Dendritic cell treated with granulocyte-macrophage colony-stimulating factor and Interleukin-4, amounts not matched to agents 40 ng/mL and 50 ng/mL, for 4 days (primary cell): ENCODE measurements at regions of chr11 and their contacts with region 1.

Region 1: DNA sequence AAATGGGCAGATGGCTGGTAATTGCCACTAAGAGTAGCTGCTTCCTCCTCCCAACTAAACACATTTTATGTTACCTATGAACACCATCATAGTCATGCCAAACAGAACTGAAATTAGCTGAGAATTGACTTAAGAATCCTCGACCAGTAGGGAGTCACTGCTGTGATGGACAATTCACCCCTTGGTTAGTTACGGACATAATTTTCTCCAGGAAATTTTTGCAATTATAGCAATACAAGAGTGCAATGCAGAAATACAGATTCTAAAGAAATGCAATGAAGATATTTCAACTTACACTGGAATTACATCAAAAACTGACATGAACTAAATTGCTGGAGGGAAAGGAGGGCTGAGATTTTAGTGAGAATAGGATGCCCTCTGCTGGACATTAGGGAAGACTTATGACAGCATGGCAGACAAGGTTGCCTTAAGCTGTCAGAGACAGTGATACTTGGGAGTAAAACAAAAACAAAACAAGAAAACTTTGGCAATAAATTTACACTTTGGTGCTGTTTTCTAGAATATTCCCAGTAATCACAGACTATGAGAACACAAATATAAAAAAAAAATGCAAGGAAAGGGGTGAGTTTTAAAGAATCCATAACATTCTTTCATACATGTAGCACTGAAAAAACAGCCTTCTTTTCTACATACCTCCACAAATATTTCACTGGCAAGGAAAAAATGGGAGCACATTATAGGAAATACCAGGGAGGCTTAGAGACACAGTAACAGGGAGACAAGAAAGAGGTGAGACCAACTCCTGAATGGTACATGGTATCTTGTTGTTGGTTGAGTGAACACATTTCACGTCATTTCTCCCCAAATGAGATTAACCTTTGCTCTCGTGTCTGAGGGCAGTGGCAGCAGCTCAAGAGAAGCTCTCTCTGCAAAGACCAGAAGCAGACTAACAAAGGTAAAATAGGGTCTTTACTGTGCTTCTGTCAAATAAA is 11.2 kb upstream of the PPP2R1B start:
- H3K4me3 Mint-ChIP-seq: no peak overlapping the region
- H3K27ac Mint-ChIP-seq: no peak overlapping the region
- H3K4me1 Mint-ChIP-seq: no peaks in the 10 kb centered on the region
- H3K27me3 Mint-ChIP-seq: no peaks in the 10 kb centered on the region

Region 2: DNA sequence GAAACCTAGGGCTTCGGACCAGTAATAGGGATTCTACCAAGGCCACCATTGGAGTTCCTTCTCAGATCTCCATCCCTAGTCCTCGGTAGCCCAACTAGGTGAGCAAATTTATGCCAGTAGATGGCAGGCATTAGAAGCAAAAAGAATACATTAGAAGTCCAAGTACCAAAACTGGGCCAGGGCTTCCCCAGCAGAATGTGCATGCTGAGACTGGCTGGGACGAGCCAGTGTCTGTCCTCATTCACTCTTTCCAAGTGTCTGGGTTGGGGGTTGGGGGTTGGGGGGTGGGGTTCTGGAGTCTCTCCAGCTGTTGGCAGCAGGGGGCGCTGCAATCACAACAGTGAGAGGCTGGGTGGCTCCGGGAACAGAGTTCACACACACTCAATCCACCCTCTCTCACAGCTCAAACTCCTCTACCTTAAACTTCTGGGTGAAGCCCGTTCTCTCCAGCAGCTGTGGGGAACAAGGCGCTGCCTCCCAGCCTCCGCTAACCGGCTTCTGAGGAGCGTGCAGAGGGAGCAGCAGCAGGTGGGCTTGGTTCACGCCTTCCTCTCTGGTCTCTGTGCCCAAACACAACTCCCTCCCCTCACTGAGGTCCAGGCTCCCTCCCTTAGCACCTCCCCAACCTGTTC is 322.7 kb before region 1 on chr11:
- intact Hi-C with region 1: loop called (anchors 10 kb)
- H3K4me3 Mint-ChIP-seq: no peak overlapping the region
- H3K27ac Mint-ChIP-seq: no peak overlapping the region
- H3K4me1 Mint-ChIP-seq: no peaks in the 10 kb centered on the region
- H3K27me3 Mint-ChIP-seq: peaks cover 20% of the 10 kb centered on the region

Region 3: GRCh38 chr11:111565114-111565720 is 212.2 kb before region 1 on chr11:
- intact Hi-C with region 1: loop called (anchors 1 kb)
- H3K4me3 Mint-ChIP-seq: no peak overlapping the region
- H3K27ac Mint-ChIP-seq: no peak overlapping the region
- H3K4me1 Mint-ChIP-seq: peaks cover 7% of the 10 kb centered on the region
- H3K27me3 Mint-ChIP-seq: peaks cover 1% of the 10 kb centered on the region

Region 4: GRCh38 chr11:111586388-111586831 is 191.0 kb before region 1 on chr11:
- intact Hi-C with region 1: loop called (anchors 5 kb)
- H3K4me3 Mint-ChIP-seq: no peak overlapping the region
- H3K27ac Mint-ChIP-seq: no peak overlapping the region
- H3K4me1 Mint-ChIP-seq: peaks cover 13% of the 10 kb centered on the region
- H3K27me3 Mint-ChIP-seq: no peaks in the 10 kb centered on the region

Region 5: GRCh38 chr11:111659201-111660115 is 117.9 kb before region 1 on chr11:
- intact Hi-C with region 1: no loop called
- H3K4me3 Mint-ChIP-seq: no peak overlapping the region
- H3K27ac Mint-ChIP-seq: no peak overlapping the region
- H3K4me1 Mint-ChIP-seq: peaks cover 28% of the 10 kb centered on the region
- H3K27me3 Mint-ChIP-seq: no peaks in the 10 kb centered on the region

Region 6: DNA sequence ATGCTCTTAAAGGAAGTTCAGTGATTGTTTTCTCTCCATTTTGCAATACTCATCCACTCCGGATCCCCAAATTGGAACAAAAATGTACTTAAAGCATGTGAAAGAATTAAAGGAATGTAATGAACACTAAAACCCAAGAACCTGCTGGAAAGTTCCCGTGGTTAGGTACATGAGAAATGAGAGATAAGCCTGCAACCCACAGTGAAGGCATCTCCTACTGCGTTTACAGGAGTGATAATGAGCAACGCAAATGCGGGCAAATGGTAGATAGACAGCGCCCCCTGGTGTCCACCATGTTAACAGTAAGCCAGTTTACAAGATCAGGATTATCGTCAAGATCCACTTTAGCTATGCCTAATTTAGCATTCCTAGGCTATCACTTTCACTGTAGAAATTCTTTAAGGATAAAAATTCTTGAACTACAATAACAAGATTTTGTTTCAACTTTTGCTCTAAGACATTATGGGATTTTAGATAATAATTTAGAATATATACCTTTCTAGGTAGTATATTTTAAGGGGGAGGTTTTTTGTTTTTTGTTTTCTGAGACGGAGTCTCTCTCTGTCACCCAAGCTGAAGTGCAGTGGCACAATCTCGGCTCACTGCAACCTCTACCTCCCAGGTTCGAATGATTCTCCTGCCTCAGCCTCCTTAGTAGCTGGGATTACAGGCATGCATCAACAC is 64.1 kb after region 1 on chr11:
- intact Hi-C with region 1: loop called (anchors 5 kb)
- H3K4me3 Mint-ChIP-seq: no peak overlapping the region
- H3K27ac Mint-ChIP-seq: no peak overlapping the region
- H3K4me1 Mint-ChIP-seq: peaks cover 34% of the 10 kb centered on the region
- H3K27me3 Mint-ChIP-seq: no peaks in the 10 kb centered on the region

Region 7: DNA sequence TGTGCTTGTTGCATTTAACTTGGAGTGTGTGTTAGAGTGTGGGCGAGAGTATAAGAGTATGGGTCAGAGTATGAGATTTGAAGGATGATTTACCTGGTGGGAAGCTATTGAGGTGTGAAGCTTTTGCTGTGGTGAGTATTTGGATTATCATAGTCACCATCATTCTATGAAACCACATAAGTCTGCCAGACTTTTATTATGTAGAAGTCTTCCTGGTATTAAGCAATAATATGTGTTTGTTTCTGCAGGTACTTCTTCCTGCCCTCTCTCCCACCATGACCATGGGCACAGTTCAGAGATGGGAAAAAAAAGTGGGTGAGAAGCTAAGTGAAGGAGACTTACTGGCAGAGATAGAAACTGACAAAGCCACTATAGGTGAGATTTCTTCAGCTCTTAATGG is 255.8 kb after region 1 on chr11:
- intact Hi-C with region 1: no loop called
- H3K4me3 Mint-ChIP-seq: no peak overlapping the region
- H3K27ac Mint-ChIP-seq: no peak overlapping the region
- H3K4me1 Mint-ChIP-seq: peaks cover 4% of the 10 kb centered on the region
- H3K27me3 Mint-ChIP-seq: no peaks in the 10 kb centered on the region